ENCODE measurements at regions of chr3 and their contacts with region 1.

Region 1: GRCh38 chr3:47420511-47421484 is 40.0 kb downstream of the PTPN23 start:
- DNase-seq: peak; percentile 79 to 93 (median 89)
- ATAC-seq: peak; percentile 99
- H3K4me3 ChIP-seq: peak overlapping the region in 1 of 2 experiments; percentile 32
- H3K4me3 Mint-ChIP-seq: peak overlapping the region; percentile 70
- H3K27ac ChIP-seq: peak overlapping the region; percentile 53 to 90
- H3K27ac Mint-ChIP-seq: peak overlapping the region; percentile 99
- H3K4me1 ChIP-seq: peaks cover 14% of the 10 kb centered on the region
- H3K4me1 Mint-ChIP-seq: peaks cover 15% of the 10 kb centered on the region
- H3K27me3 ChIP-seq: no peaks in the 10 kb centered on the region
- H3K27me3 Mint-ChIP-seq: no peaks in the 10 kb centered on the region
- CTCF ChIP-seq: peak; percentile 91

Region 2: DNA sequence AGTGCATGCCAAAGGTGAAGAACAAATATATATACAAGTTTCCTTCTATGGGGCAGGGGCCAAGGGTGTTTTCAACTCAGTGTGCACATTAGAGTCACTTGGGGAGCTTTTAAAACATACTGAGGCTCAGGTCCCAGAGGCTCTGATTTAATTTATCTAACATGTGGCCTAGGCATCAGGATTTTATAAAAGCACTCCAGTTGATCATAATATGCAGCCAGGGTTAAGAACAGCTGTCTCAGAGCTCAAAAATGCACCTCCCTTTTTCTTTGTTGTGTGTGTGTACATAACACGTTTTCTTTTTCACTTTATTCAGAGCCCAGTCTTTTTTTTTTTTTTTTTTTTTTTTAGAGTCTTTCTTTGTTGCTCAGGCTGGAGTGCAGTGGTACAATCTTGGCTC is 199.0 kb before region 1 on chr3:
- CTCF ChIA-PET with region 1: no interaction called
- POLR2A ChIA-PET with region 1: no interaction called
- intact Hi-C with region 1: no loop called
- DNase-seq: no peak
- ATAC-seq: no peak
- H3K4me3 ChIP-seq: no peak overlapping the region
- H3K4me3 Mint-ChIP-seq: no peak overlapping the region
- H3K27ac ChIP-seq: no peak overlapping the region
- H3K27ac Mint-ChIP-seq: no peak overlapping the region
- H3K4me1 ChIP-seq: no peaks in the 10 kb centered on the region
- H3K4me1 Mint-ChIP-seq: no peaks in the 10 kb centered on the region
- H3K27me3 ChIP-seq: no peaks in the 10 kb centered on the region
- H3K27me3 Mint-ChIP-seq: no peaks in the 10 kb centered on the region
- CTCF ChIP-seq: no peak

Region 3: GRCh38 chr3:47380601-47381316 is 40.0 kb before region 1 on chr3 and contains the start of gene PTPN23:
- CTCF ChIA-PET with region 1: interaction called, 9 read pairs
- POLR2A ChIA-PET with region 1: interaction called, 5 read pairs
- intact Hi-C with region 1: loop called (anchors 1 kb)
- DNase-seq: peak; percentile 97 to 99 (median 99)
- ATAC-seq: peak; percentile 77
- H3K4me3 ChIP-seq: peak within 1 kb of the TSS; percentile 59 to 86
- H3K4me3 Mint-ChIP-seq: peak within 1 kb of the TSS; percentile 99
- H3K27ac ChIP-seq: peak within 1 kb of the TSS; percentile 76 to 97
- H3K27ac Mint-ChIP-seq: peak within 1 kb of the TSS; percentile 100
- H3K4me1 ChIP-seq: peaks cover 30% of the 10 kb centered on the region
- H3K4me1 Mint-ChIP-seq: peaks cover 49% of the 10 kb centered on the region
- H3K27me3 ChIP-seq: no peaks in the 10 kb centered on the region
- H3K27me3 Mint-ChIP-seq: no peaks in the 10 kb centered on the region
- CTCF ChIP-seq: no peak
- total RNA-seq, gene PTPN23: 39.2 to 48.3 TPM

Region 4: DNA sequence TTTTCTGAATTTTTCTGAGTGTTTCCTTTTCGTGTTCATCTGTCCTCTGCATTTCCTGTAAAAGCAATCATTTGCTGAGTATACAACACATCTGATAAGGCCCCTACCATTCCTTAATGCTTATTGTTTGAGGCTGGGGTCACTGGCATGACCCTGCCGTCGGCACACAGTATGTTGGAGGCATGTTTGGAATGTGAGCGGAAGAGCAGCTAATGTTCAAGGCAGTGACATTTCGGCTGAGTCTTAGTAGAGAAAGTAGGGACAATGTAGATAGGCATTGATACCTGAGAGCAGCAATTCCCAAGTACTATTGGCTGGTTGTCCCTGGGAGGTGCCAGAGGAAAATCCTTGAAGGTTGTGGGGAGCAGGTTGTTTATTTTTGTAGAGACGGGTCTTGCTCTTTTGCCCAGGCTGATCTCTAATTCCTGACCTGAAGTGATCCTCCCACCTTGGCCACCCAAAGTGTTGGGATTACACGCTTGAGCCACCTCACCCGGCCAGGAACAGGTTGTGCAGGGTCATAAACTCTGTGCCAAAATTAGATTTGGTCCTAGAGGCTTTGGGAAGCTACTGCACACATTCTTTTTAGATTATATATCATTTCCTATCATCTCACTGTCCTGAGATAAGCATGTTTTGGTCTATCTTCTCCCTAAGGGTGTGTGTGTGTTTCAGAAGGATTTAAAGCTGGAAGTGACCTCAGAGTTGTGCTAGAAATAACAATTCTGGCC is 26.5 kb before region 1 on chr3:
- CTCF ChIA-PET with region 1: interaction called, 10 read pairs
- POLR2A ChIA-PET with region 1: no interaction called
- intact Hi-C with region 1: no loop called
- DNase-seq: no peak
- ATAC-seq: no peak
- H3K4me3 ChIP-seq: no peak overlapping the region
- H3K4me3 Mint-ChIP-seq: no peak overlapping the region
- H3K27ac ChIP-seq: no peak overlapping the region
- H3K27ac Mint-ChIP-seq: peak overlapping the region; percentile 69
- H3K4me1 ChIP-seq: peaks cover 7% of the 10 kb centered on the region
- H3K4me1 Mint-ChIP-seq: peaks cover 36% of the 10 kb centered on the region
- H3K27me3 ChIP-seq: no peaks in the 10 kb centered on the region
- H3K27me3 Mint-ChIP-seq: no peaks in the 10 kb centered on the region
- CTCF ChIP-seq: no peak

Region 5: GRCh38 chr3:47475570-47476329 is 55.0 kb after region 1 on chr3 and contains the start of gene SCAP:
- CTCF ChIA-PET with region 1: interaction called, 42 read pairs
- POLR2A ChIA-PET with region 1: interaction called, 11 read pairs
- intact Hi-C with region 1: loop called in 1 of 2 experiments (anchors 1 kb)
- DNase-seq: peak; percentile 90 to 98 (median 96)
- ATAC-seq: peak; percentile 90
- H3K4me3 ChIP-seq: peak within 1 kb of the TSS; percentile 58 to 83
- H3K4me3 Mint-ChIP-seq: peak within 1 kb of the TSS; percentile 93
- H3K27ac ChIP-seq: peak within 1 kb of the TSS; percentile 69 to 86
- H3K27ac Mint-ChIP-seq: peak within 1 kb of the TSS; percentile 94
- H3K4me1 ChIP-seq: peaks cover 28% of the 10 kb centered on the region
- H3K4me1 Mint-ChIP-seq: peaks cover 43% of the 10 kb centered on the region
- H3K27me3 ChIP-seq: no peaks in the 10 kb centered on the region
- H3K27me3 Mint-ChIP-seq: no peaks in the 10 kb centered on the region
- CTCF ChIP-seq: peak; percentile 97
- total RNA-seq, gene SCAP: 72.8 to 76.6 TPM

Region 6: DNA sequence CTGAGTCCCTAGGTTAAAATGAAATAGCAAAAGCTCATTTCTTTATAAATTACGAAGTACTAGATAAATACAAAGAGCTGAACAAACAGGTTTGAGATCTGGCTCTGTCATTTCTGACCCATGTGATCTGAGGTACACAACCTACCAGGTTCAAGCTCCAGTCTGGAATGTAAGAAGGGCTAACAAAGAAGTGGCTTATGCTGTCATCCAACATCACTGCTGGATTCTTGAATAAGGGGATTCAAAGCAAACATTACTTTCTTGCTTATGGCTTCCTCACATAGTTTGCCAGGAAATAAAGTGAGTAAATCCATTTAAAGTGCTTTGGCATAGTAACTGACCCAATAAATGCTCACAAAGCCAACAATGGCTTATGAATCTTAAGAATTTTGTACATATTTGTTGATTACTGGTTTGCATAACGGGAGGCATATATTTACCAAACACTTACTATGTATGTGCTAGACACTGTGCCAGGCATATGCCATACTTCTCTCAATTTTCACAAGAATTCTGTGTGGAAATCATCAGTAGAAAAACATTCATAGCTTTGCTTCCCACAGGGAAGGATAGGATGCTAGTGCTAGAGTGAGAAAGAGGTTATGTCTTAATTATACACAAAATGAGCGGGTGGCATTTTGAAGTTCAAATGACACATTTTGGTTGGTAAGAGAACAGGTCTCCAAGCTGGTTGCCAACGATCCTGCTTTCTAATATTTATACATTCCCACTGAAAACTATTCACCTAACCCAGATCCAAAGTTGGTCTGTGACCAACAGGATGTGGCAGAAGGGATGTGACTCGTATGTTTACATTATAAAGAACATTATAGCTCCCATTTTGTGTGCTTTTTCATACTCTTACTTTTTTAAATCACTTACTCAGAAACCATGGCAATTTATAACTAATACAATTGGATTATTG is 196.6 kb after region 1 on chr3:
- CTCF ChIA-PET with region 1: no interaction called
- POLR2A ChIA-PET with region 1: no interaction called
- intact Hi-C with region 1: no loop called
- DNase-seq: no peak
- ATAC-seq: no peak
- H3K4me3 ChIP-seq: no peak overlapping the region
- H3K4me3 Mint-ChIP-seq: no peak overlapping the region
- H3K27ac ChIP-seq: no peak overlapping the region
- H3K27ac Mint-ChIP-seq: no peak overlapping the region
- H3K4me1 ChIP-seq: no peaks in the 10 kb centered on the region
- H3K4me1 Mint-ChIP-seq: no peaks in the 10 kb centered on the region
- H3K27me3 ChIP-seq: no peaks in the 10 kb centered on the region
- H3K27me3 Mint-ChIP-seq: no peaks in the 10 kb centered on the region
- CTCF ChIP-seq: no peak

Region 7: DNA sequence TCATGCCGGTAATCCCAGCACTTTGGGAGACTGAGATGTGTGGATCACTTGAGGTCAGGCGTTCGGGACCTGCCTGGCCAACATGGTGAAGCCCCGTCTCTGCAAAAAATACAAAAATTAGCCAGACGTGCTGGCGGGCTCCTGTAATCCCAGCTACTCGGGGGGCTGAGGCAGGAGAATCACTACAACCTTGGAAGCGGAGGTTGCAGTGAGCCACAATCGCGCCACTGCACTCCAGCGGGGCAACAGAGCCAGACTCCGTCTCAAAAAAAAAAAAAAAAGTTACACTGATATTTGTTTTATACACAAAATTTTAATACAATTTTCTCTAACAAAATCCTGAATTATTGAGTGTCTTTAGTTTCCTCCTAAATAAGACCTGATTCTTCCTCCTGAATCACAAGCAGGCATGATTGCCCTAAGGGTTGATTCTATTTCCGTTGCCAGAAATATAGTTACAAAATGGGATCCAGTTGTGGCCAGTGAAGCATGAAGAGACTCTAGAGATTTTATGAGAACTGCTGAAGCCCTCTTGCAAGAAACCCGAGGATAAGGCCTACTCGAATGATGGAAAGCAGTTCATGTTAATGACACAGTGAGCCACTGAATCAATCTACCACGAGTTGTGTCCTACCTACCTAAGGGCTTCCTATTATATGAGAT is 370.5 kb after region 1 on chr3:
- CTCF ChIA-PET with region 1: no interaction called
- POLR2A ChIA-PET with region 1: no interaction called
- intact Hi-C with region 1: loop called (anchors 1 kb)
- DNase-seq: no peak
- ATAC-seq: no peak
- H3K4me3 ChIP-seq: no peak overlapping the region
- H3K4me3 Mint-ChIP-seq: no peak overlapping the region
- H3K27ac ChIP-seq: no peak overlapping the region
- H3K27ac Mint-ChIP-seq: no peak overlapping the region
- H3K4me1 ChIP-seq: no peaks in the 10 kb centered on the region
- H3K4me1 Mint-ChIP-seq: peaks cover 5% of the 10 kb centered on the region
- H3K27me3 ChIP-seq: no peaks in the 10 kb centered on the region
- H3K27me3 Mint-ChIP-seq: no peaks in the 10 kb centered on the region
- CTCF ChIP-seq: no peak

Measured in CD8-positive, alpha-beta T cell (primary cell).